ENCODE measurements at regions of chr21 and their contacts with region 1.

Region 1: GRCh38 chr21:32257962-32258785 is 20.7 kb downstream of the MIS18A start:
- DNase-seq: peak; percentile 34
- ATAC-seq: peak; percentile 54
- H3K4me3 ChIP-seq: no peak overlapping the region
- H3K4me3 Mint-ChIP-seq: no peak overlapping the region
- H3K27ac ChIP-seq: no peak overlapping the region
- H3K27ac Mint-ChIP-seq: no peak overlapping the region
- H3K4me1 ChIP-seq: no peaks in the 10 kb centered on the region
- H3K4me1 Mint-ChIP-seq: peaks cover 2% of the 10 kb centered on the region
- H3K27me3 ChIP-seq: no peaks in the 10 kb centered on the region
- H3K27me3 Mint-ChIP-seq: peaks cover 18% of the 10 kb centered on the region
- CTCF ChIP-seq: peak; percentile 62

Region 2: DNA sequence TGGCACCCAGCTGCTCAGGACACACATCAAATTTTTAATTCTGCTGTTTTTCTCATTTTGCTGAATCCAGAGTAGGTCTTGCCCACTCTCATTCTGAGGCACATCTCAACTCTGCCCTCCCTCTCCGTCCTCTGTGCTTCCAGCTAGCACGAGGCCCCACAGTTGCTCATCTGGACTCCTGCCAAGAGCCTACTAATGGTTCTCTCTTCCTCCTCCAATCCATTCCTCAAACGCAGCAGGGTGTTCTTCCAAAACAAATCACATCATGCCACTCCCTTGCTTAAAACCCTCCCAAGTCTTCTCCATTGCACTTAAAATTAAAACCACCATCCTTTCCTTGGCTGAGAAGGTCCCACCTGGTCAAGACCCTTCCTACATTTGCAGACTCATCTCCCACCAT is 476.4 kb before region 1 on chr21:
- CTCF ChIA-PET with region 1: interaction called, 19 read pairs
- POLR2A ChIA-PET with region 1: no interaction called
- intact Hi-C with region 1: loop called (anchors 1 kb)
- DNase-seq: no peak
- ATAC-seq: no peak
- H3K4me3 ChIP-seq: no peak overlapping the region
- H3K4me3 Mint-ChIP-seq: no peak overlapping the region
- H3K27ac ChIP-seq: no peak overlapping the region
- H3K27ac Mint-ChIP-seq: no peak overlapping the region
- H3K4me1 ChIP-seq: peaks cover 6 to 11% of the 10 kb centered on the region in 2 donors
- H3K4me1 Mint-ChIP-seq: peaks cover 15% of the 10 kb centered on the region
- H3K27me3 ChIP-seq: no peaks in the 10 kb centered on the region
- H3K27me3 Mint-ChIP-seq: no peaks in the 10 kb centered on the region
- CTCF ChIP-seq: no peak

Region 3: DNA sequence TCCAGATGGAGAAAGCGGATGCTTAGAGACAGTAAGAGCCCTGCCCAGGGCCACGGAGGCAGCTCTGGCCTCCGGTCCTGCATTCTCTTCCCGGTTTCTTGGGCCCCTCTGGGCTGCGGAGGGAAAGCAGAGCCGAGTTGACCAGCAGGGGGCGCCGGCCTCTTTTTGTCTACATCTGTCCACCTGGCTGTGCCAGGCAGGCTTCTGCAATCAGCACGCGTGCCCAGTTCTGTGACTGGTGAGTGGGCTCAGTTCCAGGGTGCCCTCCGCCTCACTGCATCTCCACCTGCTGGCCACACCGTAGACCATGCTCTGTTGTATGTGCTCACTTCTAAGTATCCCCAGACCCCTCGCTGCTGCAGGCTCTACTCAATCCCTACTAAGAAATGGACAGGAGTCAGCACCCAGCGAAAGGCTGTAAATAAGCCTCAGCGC is 392.1 kb before region 1 on chr21:
- CTCF ChIA-PET with region 1: interaction called, 4 read pairs
- POLR2A ChIA-PET with region 1: no interaction called
- intact Hi-C with region 1: loop called (anchors 2 kb)
- DNase-seq: peak; percentile 69
- ATAC-seq: peak; percentile 86
- H3K4me3 ChIP-seq: no peak overlapping the region
- H3K4me3 Mint-ChIP-seq: no peak overlapping the region
- H3K27ac ChIP-seq: no peak overlapping the region
- H3K27ac Mint-ChIP-seq: no peak overlapping the region
- H3K4me1 ChIP-seq: peaks cover 0 to 8% of the 10 kb centered on the region in 2 donors
- H3K4me1 Mint-ChIP-seq: no peaks in the 10 kb centered on the region
- H3K27me3 ChIP-seq: peaks cover 0 to 30% (median 9%) of the 10 kb centered on the region in 4 experiments
- H3K27me3 Mint-ChIP-seq: peaks cover 37% of the 10 kb centered on the region
- CTCF ChIP-seq: peak; percentile 85

Region 4: GRCh38 chr21:32240851-32241687 is 17.1 kb before region 1 on chr21:
- CTCF ChIA-PET with region 1: no interaction called
- POLR2A ChIA-PET with region 1: no interaction called
- intact Hi-C with region 1: no loop called
- DNase-seq: no peak
- ATAC-seq: no peak
- H3K4me3 ChIP-seq: no peak overlapping the region
- H3K4me3 Mint-ChIP-seq: no peak overlapping the region
- H3K27ac ChIP-seq: no peak overlapping the region
- H3K27ac Mint-ChIP-seq: no peak overlapping the region
- H3K4me1 ChIP-seq: no peaks in the 10 kb centered on the region
- H3K4me1 Mint-ChIP-seq: no peaks in the 10 kb centered on the region
- H3K27me3 ChIP-seq: no peaks in the 10 kb centered on the region
- H3K27me3 Mint-ChIP-seq: peaks cover 18% of the 10 kb centered on the region
- CTCF ChIP-seq: no peak

Region 5: DNA sequence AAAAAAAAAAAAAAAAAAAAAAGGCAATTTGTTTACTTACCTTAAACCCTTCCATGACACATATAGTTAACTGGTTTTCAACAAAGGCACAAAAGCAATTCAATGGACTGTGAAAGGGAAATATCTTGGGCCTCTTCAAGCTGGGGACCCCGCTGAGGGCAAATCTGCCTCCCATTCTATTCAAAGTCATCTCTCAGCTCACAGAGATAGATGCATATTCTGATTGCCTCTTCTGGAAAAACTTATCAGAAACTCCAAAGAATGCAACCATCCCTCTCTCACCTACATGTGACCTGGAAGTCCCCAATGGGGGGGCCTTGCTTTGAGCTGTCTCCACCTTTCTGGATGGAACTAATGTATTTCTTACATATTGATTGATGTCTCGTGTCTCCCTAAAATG is 481.8 kb after region 1 on chr21:
- CTCF ChIA-PET with region 1: no interaction called
- POLR2A ChIA-PET with region 1: interaction called, 13 read pairs
- intact Hi-C with region 1: no loop called
- DNase-seq: no peak
- ATAC-seq: no peak
- H3K4me3 ChIP-seq: no peak overlapping the region
- H3K4me3 Mint-ChIP-seq: no peak overlapping the region
- H3K27ac ChIP-seq: no peak overlapping the region
- H3K27ac Mint-ChIP-seq: no peak overlapping the region
- H3K4me1 ChIP-seq: no peaks in the 10 kb centered on the region
- H3K4me1 Mint-ChIP-seq: no peaks in the 10 kb centered on the region
- H3K27me3 ChIP-seq: no peaks in the 10 kb centered on the region
- H3K27me3 Mint-ChIP-seq: no peaks in the 10 kb centered on the region
- CTCF ChIP-seq: no peak

Measured in B cell (primary cell).